Gastrocnemius medialis (tissue), 4 donors: ENCODE measurements at regions of chr16 and their contacts with region 1.

Region 1: GRCh38 chr16:23435500-23435899 is 17.5 kb downstream of the COG7 start:
- DNase-seq: peak in 1 of 2 donors; percentile 27
- ATAC-seq: peak in 1 of 2 donors; percentile 62
- H3K4me3 ChIP-seq: no peak overlapping the region
- H3K27ac ChIP-seq: no peak overlapping the region
- H3K4me1 ChIP-seq: peaks cover 0 to 5% of the 10 kb centered on the region in 2 donors
- H3K27me3 ChIP-seq: no peaks in the 10 kb centered on the region
- CTCF ChIP-seq: peak; percentile 63 to 78 (median 72)
- POLR2A ChIP-seq: no peak

Region 2: GRCh38 chr16:22898874-22899348 is 536.6 kb before region 1 on chr16:
- in situ Hi-C with region 1: no loop called
- intact Hi-C with region 1: loop called (anchors 5 kb)
- DNase-seq: peak; percentile 53 to 69
- ATAC-seq: peak; percentile 81 to 91
- H3K4me3 ChIP-seq: no peak overlapping the region
- H3K27ac ChIP-seq: no peak overlapping the region
- H3K4me1 ChIP-seq: no peaks in the 10 kb centered on the region
- H3K27me3 ChIP-seq: peaks cover 0 to 5% (median 4%) of the 10 kb centered on the region in 3 donors
- CTCF ChIP-seq: peak; percentile 73 to 85 (median 78)
- POLR2A ChIP-seq: no peak

Region 3: GRCh38 chr16:23174622-23175021 is 260.9 kb before region 1 on chr16:
- in situ Hi-C with region 1: loop called in 1 of 4 experiments (anchors 5 kb)
- intact Hi-C with region 1: no loop called
- DNase-seq: no peak
- ATAC-seq: no peak
- H3K4me3 ChIP-seq: no peak overlapping the region
- H3K27ac ChIP-seq: no peak overlapping the region
- H3K4me1 ChIP-seq: no peaks in the 10 kb centered on the region
- H3K27me3 ChIP-seq: peaks cover 0 to 3% (median 0%) of the 10 kb centered on the region in 3 donors
- CTCF ChIP-seq: no peak
- POLR2A ChIP-seq: no peak

Region 4: DNA sequence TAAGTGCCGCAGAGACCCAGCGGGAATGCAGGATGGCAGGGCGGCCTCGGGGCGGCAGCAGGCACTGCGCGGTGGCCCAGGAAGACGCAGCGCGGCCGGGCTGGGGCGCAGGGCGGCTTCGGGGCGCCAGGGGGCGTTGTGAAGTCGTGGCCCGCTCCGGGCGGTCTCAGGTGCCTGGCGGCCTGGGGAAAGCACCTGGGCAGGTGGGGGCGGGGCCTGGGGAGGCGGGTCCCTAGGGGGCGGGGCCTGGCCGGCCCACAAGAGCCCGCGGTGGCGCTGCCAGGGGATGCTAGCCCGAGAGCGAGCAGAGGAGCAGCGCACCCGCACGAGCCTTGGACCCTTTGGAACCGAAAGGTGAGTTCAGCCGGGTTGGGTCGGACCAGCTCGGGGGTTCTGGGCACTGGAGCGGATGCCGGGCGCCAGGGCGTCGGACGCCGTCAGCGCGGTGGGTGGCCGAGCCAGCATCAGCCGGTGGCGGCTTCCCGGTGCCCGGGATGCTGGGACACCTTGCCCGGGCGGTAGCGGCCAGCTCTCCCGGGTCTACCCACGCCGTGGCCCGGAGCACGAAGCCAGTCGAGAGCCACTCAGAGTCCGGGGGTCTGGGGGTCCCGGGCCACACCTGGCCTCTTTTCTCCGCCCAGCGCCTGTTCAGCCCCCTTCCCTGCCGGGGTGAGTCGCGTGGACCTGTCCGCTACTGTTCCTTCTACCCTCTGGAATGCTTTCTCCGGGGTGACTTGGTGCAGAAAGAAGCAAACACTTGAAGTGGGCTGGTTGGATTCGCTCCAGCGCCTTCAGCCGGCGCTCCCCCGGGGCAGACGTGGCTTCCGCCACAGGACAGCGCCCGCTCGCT is 252.8 kb before region 1 on chr16 and contains the start of gene SCNN1G:
- in situ Hi-C with region 1: loop called in 2 of 4 experiments (anchors 5 kb)
- intact Hi-C with region 1: loop called (anchors 1 kb)
- DNase-seq: peak; percentile 14 to 51
- ATAC-seq: peak; percentile 82 to 89
- H3K4me3 ChIP-seq: peak within 1 kb of the TSS; percentile 19 to 59 (median 50)
- H3K27ac ChIP-seq: no peak within 1 kb of the TSS
- H3K4me1 ChIP-seq: peaks cover 7 to 16% of the 10 kb centered on the region in 2 donors
- H3K27me3 ChIP-seq: peaks cover 18 to 33% (median 30%) of the 10 kb centered on the region in 3 donors
- CTCF ChIP-seq: peak; percentile 80 to 99 (median 91)
- POLR2A ChIP-seq: no peak
- total RNA-seq, gene SCNN1G: 0.58 TPM in 1 of 4 donors, not detected in the others

Region 5: GRCh38 chr16:23302045-23302956 is 133.2 kb before region 1 on chr16 and contains the start of gene SCNN1B:
- in situ Hi-C with region 1: no loop called
- intact Hi-C with region 1: loop called (anchors 5 kb)
- DNase-seq: no peak
- ATAC-seq: peak; percentile 30 to 36
- H3K4me3 ChIP-seq: peak within 1 kb of the TSS; percentile 18 to 50 (median 42)
- H3K27ac ChIP-seq: no peak within 1 kb of the TSS
- H3K4me1 ChIP-seq: no peaks in the 10 kb centered on the region
- H3K27me3 ChIP-seq: peaks cover 25 to 28% (median 28%) of the 10 kb centered on the region in 3 donors
- CTCF ChIP-seq: no peak
- POLR2A ChIP-seq: no peak
- total RNA-seq, gene SCNN1B: 0.81 to 2.3 (median 0.99) TPM

Region 6: DNA sequence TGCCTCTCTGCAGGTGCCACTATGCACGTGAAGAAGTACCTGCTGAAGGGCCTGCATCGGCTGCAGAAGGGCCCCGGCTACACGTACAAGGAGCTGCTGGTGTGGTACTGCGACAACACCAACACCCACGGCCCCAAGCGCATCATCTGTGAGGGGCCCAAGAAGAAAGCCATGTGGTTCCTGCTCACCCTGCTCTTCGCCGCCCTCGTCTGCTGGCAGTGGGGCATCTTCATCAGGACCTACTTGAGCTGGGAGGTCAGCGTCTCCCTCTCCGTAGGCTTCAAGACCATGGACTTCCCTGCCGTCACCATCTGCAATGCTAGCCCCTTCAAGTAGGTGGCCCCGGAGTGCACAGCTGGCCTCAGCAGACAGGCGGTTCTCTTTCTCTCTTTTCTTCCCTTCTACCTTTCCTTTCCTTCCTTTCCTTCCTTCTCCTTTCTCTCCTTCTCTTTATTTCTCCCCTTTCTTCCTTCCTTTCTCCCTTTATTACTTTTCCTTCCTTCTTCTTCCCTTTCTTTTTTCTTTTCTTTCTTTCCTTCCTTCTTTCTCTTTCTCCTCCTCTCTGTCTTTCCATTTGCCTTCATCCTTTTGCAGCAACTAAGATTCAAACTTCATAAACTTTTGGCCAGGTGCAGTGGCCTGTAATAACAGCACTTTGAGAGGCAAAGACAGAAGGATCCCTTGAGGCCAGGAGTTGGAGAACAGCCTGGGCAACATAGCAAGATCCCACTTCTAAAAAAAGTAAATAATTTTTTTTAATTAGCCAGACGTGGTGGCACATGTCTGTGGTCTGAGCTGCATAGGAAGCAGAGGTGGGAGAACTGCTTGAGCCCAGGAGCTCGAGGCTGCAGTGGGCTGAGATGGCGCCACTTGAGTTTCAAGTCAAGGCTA is 86.7 kb before region 1 on chr16:
- in situ Hi-C with region 1: no loop called
- intact Hi-C with region 1: loop called (anchors 2 kb)
- DNase-seq: no peak
- ATAC-seq: no peak
- H3K4me3 ChIP-seq: no peak overlapping the region
- H3K27ac ChIP-seq: no peak overlapping the region
- H3K4me1 ChIP-seq: no peaks in the 10 kb centered on the region
- H3K27me3 ChIP-seq: no peaks in the 10 kb centered on the region
- CTCF ChIP-seq: no peak
- POLR2A ChIP-seq: no peak